ENCODE measurements at regions of chr2 and their contacts with region 1.

Region 1: GRCh38 chr2:197453161-197453914 is at the start of gene COQ10B:
- DNase-seq: peak; percentile 87 to 99 (median 98)
- ATAC-seq: peak; percentile 92
- H3K4me3 ChIP-seq: peak within 1 kb of the TSS; percentile 92
- H3K4me3 Mint-ChIP-seq: peak within 1 kb of the TSS; percentile 92 to 100 (median 99)
- H3K27ac ChIP-seq: peak within 1 kb of the TSS; percentile 96
- H3K27ac Mint-ChIP-seq: peak within 1 kb of the TSS; percentile 97 to 100 (median 100)
- H3K4me1 ChIP-seq: peaks cover 16% of the 10 kb centered on the region in 2 donors
- H3K4me1 Mint-ChIP-seq: peaks cover 25 to 56% (median 47%) of the 10 kb centered on the region in 7 donors
- H3K27me3 ChIP-seq: no peaks in the 10 kb centered on the region
- H3K27me3 Mint-ChIP-seq: peaks cover 0 to 2% (median 0%) of the 10 kb centered on the region in 5 donors
- total RNA-seq, gene COQ10B: 22.9 to 57.2 (median 30.5) TPM

Region 2: GRCh38 chr2:196639180-196640030 is 813.9 kb before region 1 on chr2 and contains the start of gene CCDC150:
- CTCF ChIA-PET with region 1: no interaction called
- POLR2A ChIA-PET with region 1: no interaction called
- intact Hi-C with region 1: loop called (anchors 1 kb)
- DNase-seq: peak; percentile 88 to 95 (median 94)
- ATAC-seq: peak; percentile 100
- H3K4me3 ChIP-seq: peak within 1 kb of the TSS; percentile 86
- H3K4me3 Mint-ChIP-seq: peak within 1 kb of the TSS; percentile 82 to 92 (median 88)
- H3K27ac ChIP-seq: peak within 1 kb of the TSS; percentile 48
- H3K27ac Mint-ChIP-seq: peak within 1 kb of the TSS in 8 of 9 donors; percentile 30 to 78 (median 43)
- H3K4me1 ChIP-seq: peaks cover 7 to 8% of the 10 kb centered on the region in 2 donors
- H3K4me1 Mint-ChIP-seq: peaks cover 4 to 26% (median 19%) of the 10 kb centered on the region in 7 donors
- H3K27me3 ChIP-seq: no peaks in the 10 kb centered on the region
- H3K27me3 Mint-ChIP-seq: peaks cover 0 to 15% (median 0%) of the 10 kb centered on the region in 5 donors
- total RNA-seq, gene CCDC150: 0.13 to 11.2 (median 1.2) TPM

Region 3: DNA sequence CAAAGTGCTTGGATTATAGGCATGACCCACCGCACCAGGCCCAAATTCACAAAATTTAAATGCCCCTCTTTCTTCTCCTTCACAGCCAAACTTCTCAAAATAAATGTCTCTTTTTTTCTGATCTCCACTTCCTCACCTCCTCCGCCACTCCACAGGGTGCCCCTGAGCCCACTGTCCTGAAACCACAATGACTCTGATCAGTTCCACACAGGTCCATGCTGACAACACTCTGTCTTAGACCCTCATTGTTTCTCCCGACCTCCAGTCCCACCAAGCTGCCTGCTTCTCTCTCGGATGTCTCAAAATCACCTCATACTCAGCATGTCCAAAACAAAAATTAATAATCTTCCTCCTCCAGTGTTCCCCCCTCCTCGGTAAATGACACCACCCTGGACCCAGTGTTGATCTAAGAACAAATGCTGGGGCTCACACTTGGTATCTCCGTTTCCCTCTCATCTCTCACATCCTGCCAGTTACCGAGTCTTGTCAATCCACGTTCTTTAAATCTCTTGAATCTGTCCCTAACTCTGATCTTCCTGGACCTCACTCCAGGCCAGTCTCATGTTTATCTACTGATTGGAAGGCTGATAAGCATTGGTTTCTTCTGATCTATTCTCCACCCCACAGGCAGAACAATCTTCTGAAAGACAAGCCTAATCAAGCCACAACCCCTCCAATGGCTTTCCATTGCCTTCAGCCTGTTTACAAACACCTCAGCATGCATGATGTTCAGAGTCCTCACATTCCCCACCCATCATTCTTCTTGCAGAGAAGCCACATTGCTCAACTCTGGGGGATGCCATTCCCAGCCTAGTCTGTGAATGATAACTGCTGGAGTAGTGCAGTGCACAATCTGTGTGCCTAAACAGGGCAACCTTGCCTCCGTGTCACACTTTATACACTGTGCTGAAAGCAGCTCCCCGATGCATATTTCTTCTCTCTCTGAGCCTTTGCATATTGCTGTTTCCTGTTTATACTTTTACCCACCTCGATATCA is 130.3 kb before region 1 on chr2:
- CTCF ChIA-PET with region 1: no interaction called
- POLR2A ChIA-PET with region 1: no interaction called
- intact Hi-C with region 1: loop called in 1 of 2 experiments (anchors 5 kb)
- DNase-seq: peak in 6 of 9 donors; percentile 43 to 65 (median 50)
- ATAC-seq: peak; percentile 76
- H3K4me3 ChIP-seq: peak overlapping the region; percentile 36
- H3K4me3 Mint-ChIP-seq: peak overlapping the region; percentile 68 to 88 (median 76)
- H3K27ac ChIP-seq: peak overlapping the region; percentile 73
- H3K27ac Mint-ChIP-seq: peak overlapping the region; percentile 96 to 99 (median 97)
- H3K4me1 ChIP-seq: peaks cover 33 to 59% of the 10 kb centered on the region in 2 donors
- H3K4me1 Mint-ChIP-seq: peaks cover 43 to 81% (median 71%) of the 10 kb centered on the region in 7 donors
- H3K27me3 ChIP-seq: no peaks in the 10 kb centered on the region
- H3K27me3 Mint-ChIP-seq: no peaks in the 10 kb centered on the region

Region 4: GRCh38 chr2:197425550-197425949 is 27.8 kb before region 1 on chr2:
- CTCF ChIA-PET with region 1: no interaction called
- POLR2A ChIA-PET with region 1: interaction called, 176 read pairs
- intact Hi-C with region 1: loop called in 1 of 2 experiments (anchors 5 kb)
- DNase-seq: no peak
- ATAC-seq: peak; percentile 18
- H3K4me3 ChIP-seq: no peak overlapping the region
- H3K4me3 Mint-ChIP-seq: peak overlapping the region; percentile 3 to 99 (median 66)
- H3K27ac ChIP-seq: peak overlapping the region; percentile 44
- H3K27ac Mint-ChIP-seq: peak overlapping the region in 8 of 9 donors; percentile 30 to 88 (median 59)
- H3K4me1 ChIP-seq: peaks cover 34 to 48% of the 10 kb centered on the region in 2 donors
- H3K4me1 Mint-ChIP-seq: peaks cover 53 to 85% (median 74%) of the 10 kb centered on the region in 7 donors
- H3K27me3 ChIP-seq: no peaks in the 10 kb centered on the region
- H3K27me3 Mint-ChIP-seq: no peaks in the 10 kb centered on the region

Region 5: GRCh38 chr2:197434541-197435513 is 18.5 kb before region 1 on chr2 and contains the start of gene SF3B1:
- CTCF ChIA-PET with region 1: interaction called, 6 read pairs
- POLR2A ChIA-PET with region 1: interaction called, 176 read pairs
- intact Hi-C with region 1: loop called (anchors 1 kb)
- DNase-seq: peak; percentile 98 to 99 (median 99)
- ATAC-seq: peak; percentile 99
- H3K4me3 ChIP-seq: peak within 1 kb of the TSS; percentile 98
- H3K4me3 Mint-ChIP-seq: peak within 1 kb of the TSS; percentile 88 to 100 (median 98)
- H3K27ac ChIP-seq: peak within 1 kb of the TSS; percentile 98
- H3K27ac Mint-ChIP-seq: peak within 1 kb of the TSS; percentile 100
- H3K4me1 ChIP-seq: peaks cover 28 to 46% of the 10 kb centered on the region in 2 donors
- H3K4me1 Mint-ChIP-seq: peaks cover 34 to 60% (median 49%) of the 10 kb centered on the region in 7 donors
- H3K27me3 ChIP-seq: no peaks in the 10 kb centered on the region
- H3K27me3 Mint-ChIP-seq: peaks cover 0 to 3% (median 0%) of the 10 kb centered on the region in 5 donors
- total RNA-seq, gene SF3B1: 330 to 737 (median 528) TPM

Region 6: DNA sequence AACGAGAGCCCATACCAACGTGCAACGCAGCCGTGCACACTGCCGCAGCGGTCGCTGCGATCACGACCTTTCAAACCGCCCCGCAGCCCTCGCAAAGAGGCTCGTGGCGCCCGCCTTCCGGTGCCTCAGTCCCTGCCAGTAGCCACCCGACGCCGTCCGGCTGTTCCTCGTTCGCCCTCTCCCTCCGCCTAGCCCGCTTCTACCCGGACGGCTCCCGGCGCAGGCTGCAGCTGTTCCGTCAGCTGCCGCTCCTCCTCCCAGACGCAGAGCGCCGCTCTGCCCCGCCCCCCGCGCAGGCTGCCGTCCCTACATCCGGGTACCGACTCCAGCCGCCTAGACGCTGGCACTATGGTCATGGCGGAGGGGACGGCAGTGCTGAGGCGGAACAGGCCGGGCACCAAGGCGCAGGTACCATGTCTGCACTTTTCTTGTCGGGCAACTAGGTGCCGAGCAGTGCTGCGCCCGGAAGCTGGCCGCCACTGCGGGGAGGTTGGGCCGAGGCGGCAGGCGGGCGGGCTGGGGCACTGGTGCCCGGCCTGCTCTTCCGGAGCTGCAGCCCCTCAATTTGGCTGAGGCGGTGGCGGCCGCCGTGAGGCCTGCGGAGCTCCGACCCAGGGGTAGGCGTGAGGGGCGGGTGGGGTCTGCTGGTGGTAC is 62.5 kb after region 1 on chr2 and contains the start of gene MOB4:
- CTCF ChIA-PET with region 1: no interaction called
- POLR2A ChIA-PET with region 1: interaction called, 23 read pairs
- intact Hi-C with region 1: loop called (anchors 1 kb)
- DNase-seq: peak; percentile 87 to 98 (median 92)
- ATAC-seq: peak; percentile 97
- H3K4me3 ChIP-seq: peak within 1 kb of the TSS; percentile 75
- H3K4me3 Mint-ChIP-seq: peak within 1 kb of the TSS; percentile 85 to 99 (median 98)
- H3K27ac ChIP-seq: peak within 1 kb of the TSS; percentile 86
- H3K27ac Mint-ChIP-seq: peak within 1 kb of the TSS; percentile 88 to 99 (median 95)
- H3K4me1 ChIP-seq: peaks cover 10 to 12% of the 10 kb centered on the region in 2 donors
- H3K4me1 Mint-ChIP-seq: peaks cover 28 to 49% (median 40%) of the 10 kb centered on the region in 7 donors
- H3K27me3 ChIP-seq: no peaks in the 10 kb centered on the region
- H3K27me3 Mint-ChIP-seq: no peaks in the 10 kb centered on the region
- total RNA-seq, gene MOB4: 16.1 to 22.5 (median 17.9) TPM

Region 7: GRCh38 chr2:197599285-197599965 is 146.1 kb after region 1 on chr2:
- CTCF ChIA-PET with region 1: no interaction called
- POLR2A ChIA-PET with region 1: no interaction called
- intact Hi-C with region 1: loop called in 1 of 2 experiments (anchors 1 kb)
- DNase-seq: peak in 7 of 9 donors; percentile 28 to 67 (median 55)
- ATAC-seq: peak; percentile 92
- H3K4me3 ChIP-seq: no peak overlapping the region
- H3K4me3 Mint-ChIP-seq: peak overlapping the region in 8 of 10 donors; percentile 23 to 74 (median 66)
- H3K27ac ChIP-seq: no peak overlapping the region
- H3K27ac Mint-ChIP-seq: peak overlapping the region in 1 of 9 donors; percentile 56
- H3K4me1 ChIP-seq: no peaks in the 10 kb centered on the region
- H3K4me1 Mint-ChIP-seq: peaks cover 4 to 6% (median 6%) of the 10 kb centered on the region in 7 donors
- H3K27me3 ChIP-seq: no peaks in the 10 kb centered on the region
- H3K27me3 Mint-ChIP-seq: peaks cover 6 to 30% (median 19%) of the 10 kb centered on the region in 5 donors

Measured in naive thymus-derived CD4-positive, alpha-beta T cell (primary cell).